CD8-positive, alpha-beta memory T cell (primary cell): ENCODE measurements at regions of chr6 and their contacts with region 1.

Region 1: DNA sequence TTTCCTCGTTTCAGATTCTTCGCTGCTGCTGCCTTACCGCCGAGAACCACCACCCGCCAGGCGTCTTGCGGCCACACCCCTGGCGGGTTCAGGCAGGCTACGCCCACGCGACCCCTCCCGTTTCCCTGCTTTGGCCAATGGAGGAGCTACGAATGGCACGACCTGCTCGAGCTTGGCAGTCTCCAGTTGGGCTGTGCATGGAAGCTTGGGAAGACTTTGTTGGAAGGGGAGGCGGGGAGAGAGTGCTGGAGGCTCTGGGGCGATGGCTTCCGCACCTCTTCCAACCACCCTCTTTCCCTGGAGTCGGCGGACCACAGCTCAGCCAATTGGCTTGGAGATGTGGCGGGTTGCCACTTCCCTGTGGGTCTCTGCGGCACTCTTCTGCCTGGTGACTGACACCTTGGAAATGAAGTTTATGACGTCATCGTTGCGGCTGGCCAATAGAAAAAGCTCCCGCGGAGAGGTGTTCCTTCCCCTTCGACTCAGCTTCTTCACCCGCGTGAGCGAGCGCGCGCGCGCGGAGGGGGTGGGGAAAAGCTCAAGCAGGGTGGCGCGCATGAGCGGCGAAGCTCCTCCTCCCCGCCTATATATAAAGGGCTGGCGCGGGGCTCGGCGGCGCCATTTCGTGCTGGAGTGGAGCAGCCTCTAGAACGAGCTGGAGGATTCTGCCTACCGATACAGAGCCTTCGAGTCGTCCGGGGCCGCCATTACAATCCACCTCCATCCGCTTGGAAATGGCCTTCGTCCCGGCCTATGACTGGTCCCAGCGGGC is 3.4 kb downstream of the BRD2 start:
- DNase-seq: peak; percentile 99 to 100 (median 100)
- H3K4me3 ChIP-seq: peak overlapping the region; percentile 96
- H3K4me3 Mint-ChIP-seq: peak overlapping the region; percentile 96 to 100 (median 97)
- H3K27ac ChIP-seq: peak overlapping the region; percentile 97
- H3K27ac Mint-ChIP-seq: peak overlapping the region; percentile 96 to 100 (median 99)
- H3K4me1 ChIP-seq: peaks cover 33% of the 10 kb centered on the region
- H3K4me1 Mint-ChIP-seq: peaks cover 37 to 50% (median 41%) of the 10 kb centered on the region in 3 donors
- H3K27me3 ChIP-seq: no peaks in the 10 kb centered on the region
- H3K27me3 Mint-ChIP-seq: peaks cover 0 to 19% of the 10 kb centered on the region in 2 donors

Region 2: GRCh38 chr6:32838114-32838958 is 133.4 kb before region 1 on chr6 and contains the start of gene TAP2:
- CTCF ChIA-PET with region 1: interaction called, 17 read pairs
- POLR2A ChIA-PET with region 1: interaction called, 38 read pairs
- DNase-seq: peak; percentile 94 to 98 (median 97)
- H3K4me3 ChIP-seq: peak within 1 kb of the TSS; percentile 75
- H3K4me3 Mint-ChIP-seq: peak within 1 kb of the TSS; percentile 91 to 97 (median 96)
- H3K27ac ChIP-seq: peak within 1 kb of the TSS; percentile 77
- H3K27ac Mint-ChIP-seq: peak within 1 kb of the TSS; percentile 91 to 100 (median 100)
- H3K4me1 ChIP-seq: peaks cover 78% of the 10 kb centered on the region
- H3K4me1 Mint-ChIP-seq: peaks cover 84 to 91% (median 88%) of the 10 kb centered on the region in 3 donors
- H3K27me3 ChIP-seq: no peaks in the 10 kb centered on the region
- H3K27me3 Mint-ChIP-seq: peaks cover 0 to 2% of the 10 kb centered on the region in 2 donors
- total RNA-seq, gene TAP2: 221 to 228 TPM

Region 3: GRCh38 chr6:32853541-32854375 is 118.0 kb before region 1 on chr6 and contains the starts of genes PSMB9 and TAP1:
- CTCF ChIA-PET with region 1: interaction called, 21 read pairs
- POLR2A ChIA-PET with region 1: interaction called, 79 read pairs
- DNase-seq: peak; percentile 93 to 97 (median 94)
- H3K4me3 ChIP-seq: peak within 1 kb of the TSS; percentile 90
- H3K4me3 Mint-ChIP-seq: peak within 1 kb of the TSS; percentile 95 to 100 (median 99)
- H3K27ac ChIP-seq: peak within 1 kb of the TSS; percentile 97
- H3K27ac Mint-ChIP-seq: peak within 1 kb of the TSS; percentile 99 to 100 (median 100)
- H3K4me1 ChIP-seq: peaks cover 68% of the 10 kb centered on the region
- H3K4me1 Mint-ChIP-seq: peaks cover 71 to 79% (median 77%) of the 10 kb centered on the region in 3 donors
- H3K27me3 ChIP-seq: no peaks in the 10 kb centered on the region
- H3K27me3 Mint-ChIP-seq: no peaks in the 10 kb centered on the region
- total RNA-seq, gene PSMB9: 245 to 255 TPM
- total RNA-seq, gene TAP1: 394 to 407 TPM

Region 4: GRCh38 chr6:32894080-32895005 is 77.4 kb before region 1 on chr6:
- CTCF ChIA-PET with region 1: interaction called, 6 read pairs
- POLR2A ChIA-PET with region 1: interaction called, 55 read pairs
- DNase-seq: peak; percentile 92 to 96 (median 93)
- H3K4me3 ChIP-seq: peak overlapping the region; percentile 94
- H3K4me3 Mint-ChIP-seq: peak overlapping the region; percentile 97 to 100 (median 99)
- H3K27ac ChIP-seq: peak overlapping the region; percentile 73
- H3K27ac Mint-ChIP-seq: peak overlapping the region; percentile 85 to 98 (median 96)
- H3K4me1 ChIP-seq: peaks cover 29% of the 10 kb centered on the region
- H3K4me1 Mint-ChIP-seq: peaks cover 29 to 46% (median 35%) of the 10 kb centered on the region in 3 donors
- H3K27me3 ChIP-seq: no peaks in the 10 kb centered on the region
- H3K27me3 Mint-ChIP-seq: peaks cover 0 to 1% of the 10 kb centered on the region in 2 donors

Region 5: DNA sequence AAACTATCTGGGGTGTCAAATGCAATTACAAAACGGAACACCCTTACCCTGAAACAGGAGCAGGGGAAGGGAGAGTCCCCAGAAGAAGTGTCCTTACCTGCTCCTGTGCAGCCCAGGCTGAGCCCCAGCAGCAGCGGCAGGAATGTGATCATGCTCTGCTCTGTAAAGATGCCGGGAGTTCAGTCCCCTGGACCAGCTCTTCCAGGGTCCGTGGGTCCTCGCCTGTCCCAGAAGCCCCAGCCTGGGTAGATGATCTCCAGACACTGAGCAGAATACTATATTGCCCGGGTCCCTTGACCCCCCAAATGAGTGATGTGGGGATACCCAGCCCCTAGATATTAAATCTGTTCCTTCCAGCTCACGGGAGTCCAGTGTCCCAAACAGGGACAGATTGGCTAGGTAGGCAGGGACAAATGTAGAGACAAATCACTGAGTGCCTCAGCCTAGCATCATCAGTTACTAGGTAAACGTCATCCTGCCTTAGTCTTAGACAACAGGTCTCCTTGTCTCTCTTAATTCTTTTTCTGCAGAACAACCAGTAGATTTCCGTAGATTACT is 31.0 kb before region 1 on chr6 and contains the start of gene HLA-DMB:
- CTCF ChIA-PET with region 1: interaction called, 36 read pairs
- POLR2A ChIA-PET with region 1: interaction called, 107 read pairs
- DNase-seq: peak; percentile 6 to 75 (median 68)
- H3K4me3 ChIP-seq: peak within 1 kb of the TSS; percentile 73
- H3K4me3 Mint-ChIP-seq: peak within 1 kb of the TSS; percentile 88 to 97 (median 95)
- H3K27ac ChIP-seq: peak within 1 kb of the TSS; percentile 73
- H3K27ac Mint-ChIP-seq: peak within 1 kb of the TSS; percentile 94 to 99 (median 98)
- H3K4me1 ChIP-seq: peaks cover 58% of the 10 kb centered on the region
- H3K4me1 Mint-ChIP-seq: peaks cover 56 to 70% (median 64%) of the 10 kb centered on the region in 3 donors
- H3K27me3 ChIP-seq: no peaks in the 10 kb centered on the region
- H3K27me3 Mint-ChIP-seq: peaks cover 0 to 1% of the 10 kb centered on the region in 2 donors
- total RNA-seq, gene HLA-DMB: 4.3 to 5.3 TPM